Right lobe of liver (tissue), 6 donors: ENCODE measurements at regions of chr9 and their contacts with region 1.

Region 1: GRCh38 chr9:93682232-93682968 is 106.0 kb downstream of the PHF2 start:
- DNase-seq: peak; percentile 53 to 72 (median 70)
- ATAC-seq: peak; percentile 71 to 85 (median 82)
- H3K4me3 ChIP-seq: no peak overlapping the region
- H3K27ac ChIP-seq: no peak overlapping the region
- H3K4me1 ChIP-seq: peaks cover 0 to 10% (median 0%) of the 10 kb centered on the region in 4 donors
- H3K27me3 ChIP-seq: no peaks in the 10 kb centered on the region
- CTCF ChIP-seq: peak; percentile 71 to 83 (median 76)
- POLR2A ChIP-seq: no peak

Region 2: DNA sequence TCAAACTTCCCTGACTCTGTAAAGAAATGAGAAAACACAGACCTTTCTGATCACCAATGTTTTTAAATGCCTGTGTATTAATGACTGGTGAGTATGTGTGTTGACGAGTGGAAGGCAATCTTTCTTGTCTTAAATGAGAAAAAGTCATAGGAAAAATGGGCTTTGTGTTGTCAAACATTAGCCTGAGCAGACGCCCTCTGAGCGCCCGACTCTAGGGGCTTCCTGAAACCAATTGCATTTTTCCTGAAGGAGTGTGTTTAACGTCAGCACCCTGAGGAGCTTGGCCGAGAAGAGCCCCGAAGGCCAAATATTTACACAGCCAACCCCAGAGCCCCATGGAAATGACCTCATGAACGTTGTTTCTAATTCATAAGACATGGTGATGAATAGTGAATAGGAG is 48.2 kb after region 1 on chr9:
- intact Hi-C with region 1: no loop called
- DNase-seq: no peak
- ATAC-seq: no peak
- H3K4me3 ChIP-seq: no peak overlapping the region
- H3K27ac ChIP-seq: no peak overlapping the region
- H3K4me1 ChIP-seq: no peaks in the 10 kb centered on the region
- H3K27me3 ChIP-seq: no peaks in the 10 kb centered on the region
- CTCF ChIP-seq: no peak
- POLR2A ChIP-seq: no peak

Region 3: DNA sequence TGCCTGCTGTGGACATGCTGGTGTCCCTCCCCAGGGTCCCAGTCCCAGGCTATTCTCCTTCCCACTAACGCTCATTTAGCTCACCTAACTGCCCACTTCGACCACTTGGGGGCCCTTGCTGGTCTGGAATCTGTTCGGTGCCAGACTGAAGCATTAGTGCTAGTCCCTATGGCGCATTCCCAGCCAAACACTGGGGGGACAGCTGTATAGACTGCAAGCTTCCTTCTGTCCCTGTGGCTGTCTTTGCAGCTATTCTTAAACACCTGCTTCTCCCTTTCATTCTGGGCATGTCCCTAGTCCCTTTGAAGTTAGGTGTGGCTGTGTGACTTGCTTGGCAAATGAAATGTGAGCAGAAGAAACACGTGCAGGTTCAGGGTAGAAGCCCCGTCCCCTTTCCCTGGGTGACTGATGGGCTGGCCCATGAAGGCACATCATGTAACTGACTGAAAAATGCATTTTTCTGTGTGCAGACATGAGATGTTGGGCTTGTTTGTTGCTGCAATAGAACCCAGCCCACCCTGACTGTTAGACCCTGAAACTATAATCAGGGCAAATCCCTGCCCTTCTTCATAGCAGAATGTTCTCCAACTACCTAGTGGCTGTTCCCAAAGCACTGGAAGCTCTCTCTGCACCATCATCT is 138.4 kb after region 1 on chr9:
- intact Hi-C with region 1: no loop called
- DNase-seq: no peak
- ATAC-seq: no peak
- H3K4me3 ChIP-seq: no peak overlapping the region
- H3K27ac ChIP-seq: no peak overlapping the region
- H3K4me1 ChIP-seq: no peaks in the 10 kb centered on the region
- H3K27me3 ChIP-seq: no peaks in the 10 kb centered on the region
- CTCF ChIP-seq: no peak
- POLR2A ChIP-seq: no peak

Region 4: DNA sequence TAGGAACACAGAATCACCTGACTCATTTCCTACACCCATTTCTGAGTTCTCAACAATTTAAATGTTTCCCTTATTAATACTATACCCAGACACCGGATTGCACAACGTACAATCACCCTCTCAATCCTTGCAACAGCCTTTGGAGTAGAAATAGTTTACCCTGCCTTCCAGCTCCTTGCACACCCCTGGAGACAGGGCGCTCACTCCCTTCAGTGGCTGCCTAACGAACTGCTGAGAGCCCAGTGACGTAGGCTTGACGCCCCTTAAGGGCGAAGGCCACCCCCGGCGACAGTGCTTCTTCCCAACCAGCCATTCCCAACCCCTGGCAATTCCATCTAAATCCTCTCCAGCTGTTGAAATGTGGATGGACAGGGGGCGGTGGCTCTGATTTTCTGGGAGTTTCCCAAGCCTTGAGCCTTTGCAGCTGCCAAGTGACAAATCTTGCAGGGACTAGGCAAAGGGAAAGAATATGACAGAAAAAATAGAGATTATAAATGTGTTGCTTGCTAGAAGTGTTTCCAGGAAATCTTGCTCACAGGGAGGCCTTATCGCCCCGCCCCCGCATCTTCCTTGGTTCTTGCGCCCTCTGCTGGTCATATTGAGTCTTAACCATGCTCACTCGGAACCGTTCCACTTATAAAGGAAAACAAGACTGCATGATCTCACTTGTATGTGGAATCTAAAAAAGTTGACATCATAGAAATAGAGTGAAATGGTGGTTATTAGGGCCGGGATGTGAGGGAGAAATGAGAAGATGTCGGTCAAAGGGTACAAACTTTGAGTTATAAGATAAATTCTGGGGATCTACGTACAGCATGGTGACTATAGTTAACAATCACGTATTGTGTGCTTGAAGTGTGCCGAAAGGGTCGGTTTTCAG is 280.4 kb after region 1 on chr9:
- intact Hi-C with region 1: loop called (anchors 5 kb)
- DNase-seq: peak; percentile 74 to 78 (median 75)
- ATAC-seq: peak; percentile 84 to 95 (median 91)
- H3K4me3 ChIP-seq: no peak overlapping the region
- H3K27ac ChIP-seq: no peak overlapping the region
- H3K4me1 ChIP-seq: peaks cover 0 to 10% (median 0%) of the 10 kb centered on the region in 4 donors
- H3K27me3 ChIP-seq: peaks cover 21 to 36% of the 10 kb centered on the region in 2 donors
- CTCF ChIP-seq: peak; percentile 86 to 91 (median 86)
- POLR2A ChIP-seq: no peak